Caco-2 (cell line): ENCODE measurements at regions of chr10 and their contacts with region 1.

Region 1: GRCh38 chr10:73517271-73517877 is 21.6 kb upstream of the PPP3CB start:
- DNase-seq: peak in 1 of 2 experiments; percentile 29
- H3K4me3 ChIP-seq: no peak overlapping the region
- H3K4me3 Mint-ChIP-seq: no peak overlapping the region
- H3K27ac Mint-ChIP-seq: peak overlapping the region; percentile 1
- H3K4me1 ChIP-seq: 0 out of 2 replicates have a peak, but pooled peaks cover 3% of the 10 kb centered on the region
- H3K4me1 Mint-ChIP-seq: peaks cover 8% of the 10 kb centered on the region
- H3K27me3 ChIP-seq: no peaks in the 10 kb centered on the region
- H3K27me3 Mint-ChIP-seq: no peaks in the 10 kb centered on the region
- CTCF ChIP-seq: no peak

Region 2: GRCh38 chr10:73495884-73496674 is 21.3 kb before region 1 on chr10 and contains the start of gene PPP3CB:
- CTCF ChIA-PET with region 1: no interaction called
- POLR2A ChIA-PET with region 1: interaction called, 14 read pairs
- intact Hi-C with region 1: no loop called
- DNase-seq: peak; percentile 93 to 98
- H3K4me3 ChIP-seq: peak within 1 kb of the TSS; percentile 86
- H3K4me3 Mint-ChIP-seq: peak within 1 kb of the TSS; percentile 89
- H3K27ac Mint-ChIP-seq: peak within 1 kb of the TSS; percentile 84
- H3K4me1 ChIP-seq: peaks cover 8% of the 10 kb centered on the region; the same call in 1 of the 2 replicates
- H3K4me1 Mint-ChIP-seq: peaks cover 27% of the 10 kb centered on the region
- H3K27me3 ChIP-seq: no peaks in the 10 kb centered on the region
- H3K27me3 Mint-ChIP-seq: no peaks in the 10 kb centered on the region
- CTCF ChIP-seq: no peak
- total RNA-seq, gene PPP3CB: 41.5 and 44.5 TPM in 2 replicates

Region 3: GRCh38 chr10:73552819-73553715 is 35.7 kb after region 1 on chr10:
- CTCF ChIA-PET with region 1: no interaction called
- POLR2A ChIA-PET with region 1: no interaction called
- intact Hi-C with region 1: no loop called
- DNase-seq: no peak
- H3K4me3 ChIP-seq: no peak overlapping the region
- H3K4me3 Mint-ChIP-seq: no peak overlapping the region
- H3K27ac Mint-ChIP-seq: no peak overlapping the region
- H3K4me1 ChIP-seq: no peaks in the 10 kb centered on the region; the same call in none of the 2 replicates
- H3K4me1 Mint-ChIP-seq: peaks cover 8% of the 10 kb centered on the region
- H3K27me3 ChIP-seq: no peaks in the 10 kb centered on the region
- H3K27me3 Mint-ChIP-seq: no peaks in the 10 kb centered on the region
- CTCF ChIP-seq: no peak

Region 4: GRCh38 chr10:73601486-73601921 is 84.1 kb after region 1 on chr10:
- CTCF ChIA-PET with region 1: no interaction called
- POLR2A ChIA-PET with region 1: no interaction called
- intact Hi-C with region 1: no loop called
- DNase-seq: peak; percentile 77 to 81
- H3K4me3 ChIP-seq: no peak overlapping the region
- H3K4me3 Mint-ChIP-seq: peak overlapping the region; percentile 57
- H3K27ac Mint-ChIP-seq: peak overlapping the region; percentile 88
- H3K4me1 ChIP-seq: peaks cover 18% of the 10 kb centered on the region
- H3K4me1 Mint-ChIP-seq: peaks cover 12% of the 10 kb centered on the region
- H3K27me3 ChIP-seq: no peaks in the 10 kb centered on the region
- H3K27me3 Mint-ChIP-seq: no peaks in the 10 kb centered on the region
- CTCF ChIP-seq: no peak

Region 5: GRCh38 chr10:73717556-73717955 is 200.2 kb after region 1 on chr10:
- CTCF ChIA-PET with region 1: no interaction called
- POLR2A ChIA-PET with region 1: no interaction called
- intact Hi-C with region 1: no loop called
- DNase-seq: no peak
- H3K4me3 ChIP-seq: no peak overlapping the region
- H3K4me3 Mint-ChIP-seq: no peak overlapping the region
- H3K27ac Mint-ChIP-seq: no peak overlapping the region
- H3K4me1 ChIP-seq: no peaks in the 10 kb centered on the region
- H3K4me1 Mint-ChIP-seq: no peaks in the 10 kb centered on the region
- H3K27me3 ChIP-seq: no peaks in the 10 kb centered on the region
- H3K27me3 Mint-ChIP-seq: no peaks in the 10 kb centered on the region
- CTCF ChIP-seq: no peak